MCF 10A (cell line): ENCODE measurements at regions of chr17 and their contacts with region 1.

Region 1: DNA sequence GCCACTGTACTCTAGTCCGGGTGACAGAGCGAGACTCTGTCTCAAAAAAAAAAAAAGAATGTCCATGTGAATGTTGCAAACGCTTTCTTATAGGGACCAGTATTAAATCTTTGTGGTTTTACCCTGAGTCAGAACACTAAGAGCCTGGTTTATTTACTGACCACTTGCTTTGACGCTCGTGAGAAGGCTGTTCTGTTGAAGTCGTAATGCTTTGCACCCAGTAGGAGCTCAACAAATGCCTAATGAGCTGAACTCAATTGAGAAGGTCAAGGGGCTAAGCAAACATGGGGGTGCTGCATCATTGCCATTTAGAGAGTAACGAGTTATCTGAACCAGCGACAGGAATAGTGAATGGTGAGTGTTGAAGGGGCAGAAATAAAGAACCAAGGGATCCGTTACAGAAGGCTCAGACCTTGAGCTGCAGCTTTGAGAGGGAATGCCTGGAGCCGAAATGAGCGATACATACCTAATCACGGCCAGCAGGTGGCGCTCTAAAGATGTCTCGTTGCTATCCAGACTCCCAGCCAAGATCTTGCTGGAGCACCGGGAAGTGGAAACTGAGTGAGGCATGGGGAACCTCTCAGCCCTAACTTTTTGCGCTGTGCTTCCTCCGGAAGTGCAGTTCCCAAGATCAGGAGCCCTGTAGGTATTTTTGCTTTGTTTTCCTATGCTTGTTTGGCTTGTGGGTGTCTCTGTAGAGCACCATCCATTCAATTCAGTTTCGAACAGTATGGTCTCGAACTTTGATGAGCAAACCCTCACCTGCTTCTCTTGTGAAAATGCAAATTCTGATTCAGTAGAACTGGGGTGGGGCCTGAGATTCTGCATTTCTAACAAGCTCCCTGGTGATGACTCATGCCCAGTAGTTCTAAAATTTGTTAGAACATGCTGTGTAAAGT is 12.6 kb upstream of the RNF222 start:
- DNase-seq: peak; percentile 93
- H3K4me3 Mint-ChIP-seq: peak overlapping the region; percentile 60
- H3K27ac Mint-ChIP-seq: no peak overlapping the region
- H3K4me1 Mint-ChIP-seq: peaks cover 14% of the 10 kb centered on the region
- H3K27me3 Mint-ChIP-seq: no peaks in the 10 kb centered on the region
- CTCF ChIP-seq: peak; percentile 76

Region 2: GRCh38 chr17:8420041-8420934 is 10.1 kb after region 1 on chr17:
- CTCF ChIA-PET with region 1: interaction called, 28 read pairs
- POLR2A ChIA-PET with region 1: interaction called, 12 read pairs
- intact Hi-C with region 1: no loop called
- DNase-seq: peak; percentile 80
- H3K4me3 Mint-ChIP-seq: no peak overlapping the region
- H3K27ac Mint-ChIP-seq: no peak overlapping the region
- H3K4me1 Mint-ChIP-seq: no peaks in the 10 kb centered on the region
- H3K27me3 Mint-ChIP-seq: peaks cover 23% of the 10 kb centered on the region
- CTCF ChIP-seq: no peak

Region 3: GRCh38 chr17:8435245-8436168 is 25.3 kb after region 1 on chr17 and contains the start of gene NDEL1:
- CTCF ChIA-PET with region 1: interaction called, 34 read pairs
- POLR2A ChIA-PET with region 1: interaction called, 54 read pairs
- intact Hi-C with region 1: loop called (anchors 1 kb)
- DNase-seq: peak; percentile 97
- H3K4me3 Mint-ChIP-seq: peak within 1 kb of the TSS; percentile 84
- H3K27ac Mint-ChIP-seq: peak within 1 kb of the TSS; percentile 97
- H3K4me1 Mint-ChIP-seq: peaks cover 12% of the 10 kb centered on the region
- H3K27me3 Mint-ChIP-seq: no peaks in the 10 kb centered on the region
- CTCF ChIP-seq: no peak
- total RNA-seq, gene NDEL1: 95.3 and 112 TPM in 2 replicates

Region 4: DNA sequence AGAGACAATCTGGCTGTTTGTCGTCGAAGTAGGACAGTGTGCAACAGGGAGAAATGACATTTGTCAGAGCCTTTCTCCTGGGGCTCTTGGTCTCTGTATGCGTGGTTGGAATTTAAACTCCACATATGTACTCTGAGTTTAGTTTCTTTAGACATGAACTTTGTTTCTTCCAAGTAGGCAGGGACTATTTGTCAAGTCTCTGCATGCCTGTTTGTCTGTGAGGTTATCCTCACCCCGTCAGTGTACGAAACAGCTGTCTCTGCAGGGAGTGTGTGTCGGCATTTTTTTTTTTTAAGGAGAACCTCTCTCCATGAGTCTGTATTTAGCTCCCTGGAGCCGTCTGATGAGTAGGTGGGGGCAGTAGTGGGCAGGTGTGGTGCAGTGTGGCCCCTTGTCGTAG is 55.1 kb after region 1 on chr17:
- CTCF ChIA-PET with region 1: interaction called, 3 read pairs
- POLR2A ChIA-PET with region 1: interaction called, 14 read pairs
- intact Hi-C with region 1: no loop called
- DNase-seq: no peak
- H3K4me3 Mint-ChIP-seq: no peak overlapping the region
- H3K27ac Mint-ChIP-seq: peak overlapping the region; percentile 52
- H3K4me1 Mint-ChIP-seq: peaks cover 14% of the 10 kb centered on the region
- H3K27me3 Mint-ChIP-seq: no peaks in the 10 kb centered on the region
- CTCF ChIP-seq: no peak

Region 5: DNA sequence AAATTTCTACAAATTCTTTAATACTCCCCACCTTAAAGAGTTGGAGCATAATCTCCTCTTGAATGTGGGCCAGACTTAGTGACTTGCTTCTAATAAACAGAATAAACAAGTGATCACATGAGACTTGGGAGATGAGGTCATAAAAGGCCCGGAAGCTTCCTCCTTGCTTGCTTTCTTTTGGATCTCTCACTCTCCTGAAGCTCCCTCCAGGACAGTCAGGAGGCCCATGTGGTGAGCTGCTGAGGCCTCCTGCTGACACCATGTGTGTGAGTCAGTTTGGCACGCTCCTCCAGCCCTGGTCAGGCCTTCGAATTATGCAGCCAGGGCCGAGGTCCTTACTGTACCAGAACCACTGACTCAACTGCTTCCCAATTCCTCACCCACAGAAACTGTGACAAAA is 78.7 kb after region 1 on chr17:
- CTCF ChIA-PET with region 1: interaction called, 8 read pairs
- POLR2A ChIA-PET with region 1: interaction called, 3 read pairs
- intact Hi-C with region 1: loop called (anchors 1 kb)
- DNase-seq: peak; percentile 80
- H3K4me3 Mint-ChIP-seq: no peak overlapping the region
- H3K27ac Mint-ChIP-seq: peak overlapping the region; percentile 77
- H3K4me1 Mint-ChIP-seq: peaks cover 7% of the 10 kb centered on the region
- H3K27me3 Mint-ChIP-seq: no peaks in the 10 kb centered on the region
- CTCF ChIP-seq: no peak

Region 6: GRCh38 chr17:8894673-8895578 is 484.7 kb after region 1 on chr17:
- CTCF ChIA-PET with region 1: interaction called, 11 read pairs
- POLR2A ChIA-PET with region 1: no interaction called
- intact Hi-C with region 1: no loop called
- DNase-seq: peak; percentile 60
- H3K4me3 Mint-ChIP-seq: no peak overlapping the region
- H3K27ac Mint-ChIP-seq: no peak overlapping the region
- H3K4me1 Mint-ChIP-seq: no peaks in the 10 kb centered on the region
- H3K27me3 Mint-ChIP-seq: peaks cover 10% of the 10 kb centered on the region
- CTCF ChIP-seq: peak; percentile 53